Psoas muscle (tissue), 8 donors: ENCODE measurements at regions of chr6 and their contacts with region 1.

Region 1: DNA sequence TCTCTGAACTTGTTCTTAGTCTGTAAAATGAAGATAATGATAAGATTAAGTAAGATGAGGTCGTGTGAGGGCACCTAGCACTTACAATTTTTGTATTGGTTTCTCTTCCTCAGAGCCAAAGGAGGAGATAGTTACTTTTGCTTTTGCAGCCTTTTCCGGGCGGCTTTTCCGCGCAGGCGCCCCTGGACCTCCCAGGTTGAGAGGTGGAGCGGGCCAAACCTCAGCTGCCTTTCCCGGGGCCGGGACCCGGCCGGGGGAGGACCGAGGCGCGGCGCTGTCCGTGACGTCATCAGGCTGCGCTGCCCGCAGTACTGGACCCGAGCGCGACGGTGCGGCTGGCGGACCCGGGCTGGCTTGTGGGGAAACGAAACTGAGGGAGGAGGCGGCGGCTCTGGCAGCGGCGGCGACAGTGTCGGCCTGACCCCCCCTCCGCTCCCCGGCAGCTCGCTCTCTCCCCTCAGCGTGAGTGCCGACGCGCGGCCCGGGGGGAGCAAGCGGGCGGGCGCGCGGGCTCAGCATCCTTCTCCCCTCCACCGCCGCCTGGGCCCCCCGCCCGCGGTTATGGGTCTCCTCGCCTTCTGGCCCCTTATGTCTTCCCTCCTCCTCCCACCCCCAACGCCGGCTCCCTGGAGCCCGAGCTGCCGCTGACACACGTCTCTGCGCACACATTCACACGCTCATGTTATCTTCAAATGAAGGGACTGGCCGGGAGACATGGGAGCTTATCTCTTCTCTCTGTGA is at the start of gene CMTR1:
- DNase-seq: peak; percentile 96 to 97
- ATAC-seq: peak; percentile 99 to 100 (median 100)
- H3K4me3 ChIP-seq: peak within 1 kb of the TSS; percentile 88
- H3K27ac ChIP-seq: peak within 1 kb of the TSS; percentile 89
- H3K4me1 ChIP-seq: peaks cover 3% of the 10 kb centered on the region
- H3K27me3 ChIP-seq: no peaks in the 10 kb centered on the region
- CTCF ChIP-seq: no peak
- total RNA-seq, gene CMTR1: 24.4 to 29.9 (median 26.5) TPM

Region 2: GRCh38 chr6:37222125-37222967 is 210.7 kb before region 1 on chr6:
- intact Hi-C with region 1: loop called in 1 of 2 experiments (anchors 5 kb)
- DNase-seq: peak; percentile 66 to 79
- ATAC-seq: peak; percentile 87 to 93 (median 91)
- H3K4me3 ChIP-seq: peak overlapping the region; percentile 74
- H3K27ac ChIP-seq: peak overlapping the region; percentile 15
- H3K4me1 ChIP-seq: peaks cover 8% of the 10 kb centered on the region
- H3K27me3 ChIP-seq: no peaks in the 10 kb centered on the region
- CTCF ChIP-seq: no peak

Region 3: DNA sequence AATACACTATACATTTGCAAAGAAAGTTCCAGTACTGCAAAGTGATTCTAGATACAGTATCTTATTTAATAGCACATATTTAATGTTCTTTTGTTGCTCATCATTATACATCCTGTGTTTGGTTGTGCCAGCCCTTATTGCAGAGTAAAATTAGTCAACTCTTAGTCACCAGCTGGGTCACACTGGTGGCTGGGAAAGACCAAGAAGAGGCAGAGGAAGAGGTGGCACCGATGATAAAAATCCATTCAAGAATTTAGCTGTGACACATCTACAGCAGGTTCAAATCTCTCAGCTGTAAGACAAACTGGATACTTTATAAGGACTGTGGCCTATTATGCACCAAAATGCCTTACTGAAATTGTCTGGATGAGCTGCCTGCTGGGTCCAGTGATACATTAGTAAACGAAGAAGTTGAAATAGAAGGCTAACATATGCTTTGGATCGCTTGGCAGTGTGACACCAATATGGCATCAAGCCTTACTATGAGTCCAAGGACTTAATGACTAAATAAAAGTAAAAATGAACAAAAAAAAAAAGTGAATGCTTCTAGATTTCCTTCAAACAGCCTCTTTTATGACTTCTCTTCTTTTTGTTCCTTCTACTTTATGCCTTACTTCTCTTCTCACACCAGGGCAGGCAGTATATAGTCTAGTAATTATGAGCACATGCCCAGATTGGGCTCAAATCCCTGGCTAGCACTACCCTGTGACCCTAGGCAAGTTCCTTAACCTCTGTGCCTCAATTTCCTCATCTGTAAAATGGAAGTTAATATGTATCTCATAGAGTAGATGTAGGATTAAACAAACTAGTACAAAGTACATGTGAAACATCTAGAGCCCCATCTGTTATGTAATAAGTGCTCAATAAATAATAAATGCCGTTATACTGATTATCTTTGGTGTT is 108.7 kb before region 1 on chr6:
- intact Hi-C with region 1: loop called in 1 of 2 experiments (anchors 1 kb)
- DNase-seq: no peak
- ATAC-seq: peak; percentile 29 to 52 (median 43)
- H3K4me3 ChIP-seq: no peak overlapping the region
- H3K27ac ChIP-seq: peak overlapping the region; percentile 38
- H3K4me1 ChIP-seq: peaks cover 5% of the 10 kb centered on the region
- H3K27me3 ChIP-seq: no peaks in the 10 kb centered on the region
- CTCF ChIP-seq: no peak